ENCODE measurements at regions of chr15 and their contacts with region 1.

Region 1: DNA sequence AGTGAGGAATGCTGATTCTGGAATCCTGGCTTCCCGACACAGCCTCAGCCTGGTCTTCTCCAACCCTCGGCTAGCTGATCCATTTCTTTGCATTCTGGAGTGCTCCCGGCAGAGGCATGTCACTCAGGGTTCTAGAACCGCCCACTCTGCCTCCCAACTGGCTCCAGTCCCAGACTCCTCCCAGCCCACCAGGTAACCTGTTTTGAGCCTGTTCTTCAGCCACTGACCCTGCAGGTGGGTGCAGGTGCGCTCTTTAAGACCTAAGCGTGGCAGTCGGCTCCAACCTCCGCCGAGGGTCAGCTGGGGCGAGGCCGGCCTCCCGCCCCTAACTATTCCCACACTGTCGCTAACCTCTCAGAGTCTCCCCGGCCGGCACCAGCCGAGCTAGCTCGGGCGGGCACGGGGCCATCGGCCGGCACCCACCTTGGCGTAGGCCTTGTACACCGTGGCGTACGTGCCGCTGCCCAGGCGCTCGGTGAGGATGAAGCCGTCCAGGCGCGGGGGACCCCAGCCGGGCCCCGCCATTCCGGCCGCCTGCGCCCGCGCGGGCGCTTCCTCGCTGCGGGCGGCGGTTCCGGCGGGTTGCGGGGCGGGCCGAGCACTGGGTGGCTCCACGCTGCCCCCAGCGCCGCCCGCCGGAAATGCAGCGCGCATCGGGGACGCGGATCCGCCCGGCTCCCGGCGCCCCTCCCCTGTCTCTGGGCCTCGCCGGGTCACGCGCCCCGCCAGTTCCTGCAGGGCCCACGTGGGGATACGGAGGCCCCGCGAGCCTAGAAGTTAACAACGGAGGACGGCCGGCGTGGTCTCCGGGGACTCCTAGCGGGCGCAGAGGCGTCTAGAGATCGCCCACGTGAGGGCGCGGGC is at the start of gene ULK3:
- DNase-seq: peak; percentile 97
- ATAC-seq: peak; percentile 95
- H3K4me3 Mint-ChIP-seq: peak within 1 kb of the TSS; percentile 91
- H3K27ac Mint-ChIP-seq: peak within 1 kb of the TSS; percentile 77
- H3K4me1 Mint-ChIP-seq: peaks cover 48% of the 10 kb centered on the region
- H3K27me3 Mint-ChIP-seq: no peaks in the 10 kb centered on the region
- CTCF ChIP-seq: no peak
- total RNA-seq, gene ULK3: 43.6 and 52.1 TPM in 2 replicates

Region 2: GRCh38 chr15:74781431-74782258 is 61.2 kb before region 1 on chr15 and contains the start of gene CSK:
- CTCF ChIA-PET with region 1: interaction called, 3 read pairs
- POLR2A ChIA-PET with region 1: interaction called, 11 read pairs
- intact Hi-C with region 1: no loop called
- DNase-seq: peak; percentile 90
- ATAC-seq: peak; percentile 42
- H3K4me3 Mint-ChIP-seq: peak within 1 kb of the TSS; percentile 94
- H3K27ac Mint-ChIP-seq: peak within 1 kb of the TSS; percentile 99
- H3K4me1 Mint-ChIP-seq: peaks cover 81% of the 10 kb centered on the region
- H3K27me3 Mint-ChIP-seq: no peaks in the 10 kb centered on the region
- CTCF ChIP-seq: no peak
- total RNA-seq, gene CSK: 540 and 557 TPM in 2 replicates

Region 3: GRCh38 chr15:74826364-74826819 is 16.4 kb before region 1 on chr15 and contains the start of gene CPLX3:
- CTCF ChIA-PET with region 1: interaction called, 3 read pairs
- POLR2A ChIA-PET with region 1: no interaction called
- intact Hi-C with region 1: loop called (anchors 2 kb)
- DNase-seq: peak; percentile 43
- ATAC-seq: peak; percentile 49
- H3K4me3 Mint-ChIP-seq: no peak within 1 kb of the TSS
- H3K27ac Mint-ChIP-seq: no peak within 1 kb of the TSS
- H3K4me1 Mint-ChIP-seq: peaks cover 13% of the 10 kb centered on the region
- H3K27me3 Mint-ChIP-seq: peaks cover 21% of the 10 kb centered on the region
- CTCF ChIP-seq: no peak
- total RNA-seq, gene CPLX3: 0.20 and 0.22 TPM in 2 replicates

Region 4: DNA sequence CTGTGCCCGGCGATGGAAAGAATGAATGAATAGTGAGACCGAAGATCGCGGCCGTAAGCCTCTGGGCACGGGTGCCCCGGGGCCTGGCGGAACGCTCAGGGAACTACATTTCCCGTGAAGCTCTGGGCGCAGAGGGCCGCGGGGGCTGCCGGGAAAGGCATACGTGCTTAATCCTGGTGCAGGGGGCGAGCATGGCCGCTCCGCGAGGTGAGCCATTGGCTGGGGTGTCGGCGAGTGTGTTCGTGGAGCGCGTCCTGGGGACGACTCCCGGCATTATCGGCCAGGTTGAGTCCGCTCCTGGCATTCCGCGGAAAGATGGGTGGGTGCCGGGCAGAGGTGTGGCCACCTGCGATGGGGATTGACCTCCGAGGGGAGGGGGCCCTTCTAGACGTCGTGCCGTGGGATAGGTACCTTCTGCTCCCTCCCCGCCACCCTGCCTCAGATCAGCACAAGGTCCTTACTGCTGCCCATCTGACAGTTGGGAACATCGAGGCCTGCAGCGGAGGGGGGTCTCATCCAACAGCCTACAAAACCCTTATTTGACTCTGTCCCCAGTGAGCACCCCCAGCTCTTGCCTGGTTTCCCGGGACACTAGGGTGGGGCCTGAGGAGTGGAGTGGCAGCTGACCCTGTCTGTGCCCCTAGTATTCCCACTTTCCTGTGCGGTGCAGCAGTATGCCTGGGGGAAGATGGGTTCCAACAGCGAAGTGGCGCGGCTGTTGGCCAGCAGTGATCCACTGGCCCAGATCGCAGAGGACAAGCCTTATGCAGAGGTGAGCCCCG is 47.3 kb after region 1 on chr15 and contains the start of gene MPI:
- CTCF ChIA-PET with region 1: no interaction called
- POLR2A ChIA-PET with region 1: interaction called, 4 read pairs
- intact Hi-C with region 1: loop called (anchors 1 kb)
- DNase-seq: peak; percentile 79
- ATAC-seq: peak; percentile 99
- H3K4me3 Mint-ChIP-seq: peak within 1 kb of the TSS; percentile 96
- H3K27ac Mint-ChIP-seq: peak within 1 kb of the TSS; percentile 89
- H3K4me1 Mint-ChIP-seq: peaks cover 45% of the 10 kb centered on the region
- H3K27me3 Mint-ChIP-seq: no peaks in the 10 kb centered on the region
- CTCF ChIP-seq: no peak
- total RNA-seq, gene MPI: 33.1 and 40.2 TPM in 2 replicates

Region 5: GRCh38 chr15:74950078-74951000 is 107.5 kb after region 1 on chr15:
- CTCF ChIA-PET with region 1: interaction called, 3 read pairs
- POLR2A ChIA-PET with region 1: interaction called, 4 read pairs
- intact Hi-C with region 1: loop called (anchors 1 kb)
- DNase-seq: peak; percentile 54
- ATAC-seq: peak; percentile 99
- H3K4me3 Mint-ChIP-seq: no peak overlapping the region
- H3K27ac Mint-ChIP-seq: no peak overlapping the region
- H3K4me1 Mint-ChIP-seq: peaks cover 4% of the 10 kb centered on the region
- H3K27me3 Mint-ChIP-seq: no peaks in the 10 kb centered on the region
- CTCF ChIP-seq: peak; percentile 24